WTC11 (cell line): ENCODE measurements at regions of chr6 and their contacts with region 1.

Region 1: GRCh38 chr6:39189915-39190544 is 39.2 kb downstream of the KCNK5 start:
- DNase-seq: peak; percentile 77
- ATAC-seq: peak; percentile 99
- H3K4me3 Mint-ChIP-seq: no peak overlapping the region
- H3K27ac Mint-ChIP-seq: peak overlapping the region; percentile 69
- H3K4me1 Mint-ChIP-seq: peaks cover 10% of the 10 kb centered on the region
- H3K27me3 Mint-ChIP-seq: no peaks in the 10 kb centered on the region; the same call in 1 of the 2 replicates
- CTCF ChIP-seq: peak; percentile 78

Region 2: GRCh38 chr6:37456816-37457560 is 1733.0 kb before region 1 on chr6:
- CTCF ChIA-PET with region 1: no interaction called
- POLR2A ChIA-PET with region 1: no interaction called
- DNase-seq: no peak
- ATAC-seq: no peak
- H3K4me3 Mint-ChIP-seq: no peak overlapping the region
- H3K27ac Mint-ChIP-seq: no peak overlapping the region
- H3K4me1 Mint-ChIP-seq: no peaks in the 10 kb centered on the region
- H3K27me3 Mint-ChIP-seq: no peaks in the 10 kb centered on the region
- CTCF ChIP-seq: no peak

Region 3: DNA sequence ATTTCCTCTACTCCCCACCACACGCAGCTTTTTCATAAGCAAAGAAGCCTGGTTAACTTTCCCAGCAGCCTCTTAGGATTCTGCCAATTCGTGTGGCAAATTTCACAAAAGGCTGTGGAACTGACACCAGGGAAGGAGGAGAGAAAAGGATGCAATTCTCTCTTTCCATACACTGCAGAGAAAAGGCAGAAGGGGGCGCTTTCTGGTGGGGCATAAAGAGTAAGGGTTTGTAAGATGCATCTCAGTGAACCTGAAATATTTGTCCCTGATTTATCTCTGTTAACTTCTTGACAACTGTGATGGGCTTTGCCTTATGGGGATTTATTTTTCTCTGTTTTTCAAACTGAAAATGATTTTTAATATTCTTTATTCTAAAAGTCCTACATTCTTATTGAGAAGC is 187.0 kb before region 1 on chr6:
- CTCF ChIA-PET with region 1: no interaction called
- POLR2A ChIA-PET with region 1: no interaction called
- DNase-seq: peak; percentile 52
- ATAC-seq: peak; percentile 76
- H3K4me3 Mint-ChIP-seq: no peak overlapping the region
- H3K27ac Mint-ChIP-seq: no peak overlapping the region
- H3K4me1 Mint-ChIP-seq: no peaks in the 10 kb centered on the region
- H3K27me3 Mint-ChIP-seq: peaks cover 8% of the 10 kb centered on the region
- CTCF ChIP-seq: 0 out of 2 replicates have a peak, but pooled peaks have one; percentile 32

Region 4: GRCh38 chr6:39166189-39166911 is 23.7 kb before region 1 on chr6:
- CTCF ChIA-PET with region 1: interaction called, 45 read pairs
- POLR2A ChIA-PET with region 1: interaction called, 3 read pairs
- DNase-seq: peak; percentile 97
- ATAC-seq: peak; percentile 96
- H3K4me3 Mint-ChIP-seq: no peak overlapping the region
- H3K27ac Mint-ChIP-seq: no peak overlapping the region
- H3K4me1 Mint-ChIP-seq: peaks cover 5% of the 10 kb centered on the region
- H3K27me3 Mint-ChIP-seq: peaks cover 8% of the 10 kb centered on the region
- CTCF ChIP-seq: peak; percentile 94

Region 5: DNA sequence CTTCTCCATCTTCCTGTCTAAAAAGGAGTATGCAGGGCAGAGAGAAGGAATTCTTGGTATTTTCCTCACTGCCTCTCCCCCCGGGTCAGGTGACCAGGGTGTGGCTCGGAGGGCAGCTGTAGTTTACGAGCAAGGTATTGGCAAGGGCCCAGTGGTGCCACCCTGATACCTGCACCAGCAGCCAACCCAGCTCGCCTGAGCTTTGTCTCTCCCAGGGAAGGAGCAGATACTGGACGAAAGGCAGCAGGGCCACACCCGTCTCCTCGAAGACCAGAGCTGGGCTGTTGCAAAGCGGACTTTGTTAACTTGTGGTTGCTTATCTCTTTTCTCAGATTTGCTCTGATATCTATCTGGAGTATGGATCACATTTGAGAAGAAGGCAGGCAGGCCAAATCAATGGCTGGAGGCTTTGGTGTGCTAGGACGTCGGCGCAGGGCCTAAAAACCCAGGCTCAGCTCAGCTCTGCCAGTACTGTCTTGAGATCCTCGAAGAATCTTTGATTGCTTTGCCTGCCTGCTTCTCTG is 13.9 kb after region 1 on chr6:
- CTCF ChIA-PET with region 1: interaction called, 122 read pairs
- POLR2A ChIA-PET with region 1: no interaction called
- DNase-seq: peak; percentile 33
- ATAC-seq: peak; percentile 29
- H3K4me3 Mint-ChIP-seq: no peak overlapping the region
- H3K27ac Mint-ChIP-seq: peak overlapping the region; percentile 97
- H3K4me1 Mint-ChIP-seq: peaks cover 82% of the 10 kb centered on the region
- H3K27me3 Mint-ChIP-seq: no peaks in the 10 kb centered on the region
- CTCF ChIP-seq: no peak

Region 6: DNA sequence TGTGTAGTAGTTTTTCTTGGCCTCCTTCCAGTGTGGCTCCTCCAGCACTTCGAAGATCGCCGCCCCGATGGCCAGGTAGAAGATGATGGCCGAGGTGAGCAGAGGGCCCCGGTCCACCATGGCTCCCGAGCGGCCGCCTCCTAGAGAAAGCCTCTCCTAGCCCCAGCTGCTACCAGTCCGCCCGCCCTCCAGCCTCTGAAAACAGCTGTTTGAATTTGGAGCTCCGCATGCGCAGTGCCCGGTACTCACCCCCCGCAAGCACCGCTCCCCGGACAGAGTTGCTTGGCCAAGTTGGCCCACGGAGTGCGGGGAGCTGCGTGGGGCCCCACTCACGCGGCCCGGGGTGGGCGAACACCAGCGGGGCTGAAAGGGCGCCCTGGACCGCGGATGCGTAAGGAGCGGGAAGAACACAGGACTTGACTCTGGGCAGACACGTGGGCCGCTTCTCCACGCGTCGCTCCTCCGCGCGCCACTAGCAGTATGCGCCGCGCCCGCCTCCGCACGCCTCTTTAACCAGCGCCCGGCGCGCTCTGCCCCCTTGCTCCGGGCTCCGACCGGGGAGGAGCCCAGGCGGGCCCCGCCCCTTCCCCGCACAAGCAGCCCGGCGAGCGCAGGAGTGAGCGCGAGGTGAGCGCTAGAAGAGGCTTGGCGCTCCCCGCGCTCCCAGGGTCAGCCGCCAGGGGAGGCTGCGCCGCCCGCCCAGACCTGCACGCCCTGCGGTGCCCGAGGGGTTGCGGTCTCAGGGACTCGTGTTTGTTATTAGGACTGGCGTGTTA is 39.1 kb after region 1 on chr6 and contains the start of gene KCNK5:
- CTCF ChIA-PET with region 1: interaction called, 63 read pairs
- POLR2A ChIA-PET with region 1: no interaction called
- DNase-seq: peak; percentile 92
- ATAC-seq: peak; percentile 87
- H3K4me3 Mint-ChIP-seq: peak within 1 kb of the TSS; percentile 89
- H3K27ac Mint-ChIP-seq: peak within 1 kb of the TSS; percentile 91
- H3K4me1 Mint-ChIP-seq: peaks cover 83% of the 10 kb centered on the region
- H3K27me3 Mint-ChIP-seq: no peaks in the 10 kb centered on the region
- CTCF ChIP-seq: peak; percentile 74
- total RNA-seq, gene KCNK5: 31.7 to 41.8 TPM (median 34.3 TPM) in 3 replicates

Region 7: GRCh38 chr6:39309942-39310531 is 120.0 kb after region 1 on chr6:
- CTCF ChIA-PET with region 1: interaction called, 204 read pairs
- POLR2A ChIA-PET with region 1: interaction called, 3 read pairs
- DNase-seq: peak; percentile 88
- ATAC-seq: peak; percentile 60
- H3K4me3 Mint-ChIP-seq: no peak overlapping the region
- H3K27ac Mint-ChIP-seq: no peak overlapping the region
- H3K4me1 Mint-ChIP-seq: peaks cover 2% of the 10 kb centered on the region
- H3K27me3 Mint-ChIP-seq: peaks cover 45% of the 10 kb centered on the region
- CTCF ChIP-seq: peak; percentile 86